Heart left ventricle (tissue), 16 donors: ENCODE measurements at regions of chr3 and their contacts with region 1.

Region 1: GRCh38 chr3:168939651-168940238 is 723.8 kb downstream of the MECOM start:
- DNase-seq: no peak
- ATAC-seq: no peak
- H3K4me3 ChIP-seq: no peak overlapping the region
- H3K27ac ChIP-seq: no peak overlapping the region
- H3K4me1 ChIP-seq: no peaks in the 10 kb centered on the region
- H3K27me3 ChIP-seq: no peaks in the 10 kb centered on the region
- CTCF ChIP-seq: no peak
- POLR2A ChIP-seq: no peak

Region 2: DNA sequence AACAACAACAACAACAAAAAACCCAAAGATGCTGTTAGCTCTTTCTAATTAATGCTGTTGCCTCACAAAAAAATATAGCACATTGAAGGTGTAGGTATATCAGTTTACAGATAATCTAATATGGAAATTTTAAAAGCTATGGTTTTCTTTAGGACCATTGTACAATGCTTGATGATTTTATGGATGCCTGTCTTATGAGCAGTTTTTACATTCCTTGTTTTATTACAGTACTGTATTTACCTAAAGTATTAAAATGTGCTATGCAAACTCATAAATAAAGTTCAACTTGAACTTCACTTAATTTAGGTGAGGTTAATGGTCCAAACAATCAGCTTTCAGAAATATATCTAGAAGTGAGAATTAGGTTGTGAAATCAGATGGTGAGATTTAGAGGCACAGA is 631.9 kb before region 1 on chr3:
- intact Hi-C with region 1: loop called in 1 of 10 experiments (anchors 5 kb)
- DNase-seq: no peak
- ATAC-seq: no peak
- H3K4me3 ChIP-seq: no peak overlapping the region
- H3K27ac ChIP-seq: no peak overlapping the region
- H3K4me1 ChIP-seq: no peaks in the 10 kb centered on the region
- H3K27me3 ChIP-seq: no peaks in the 10 kb centered on the region
- CTCF ChIP-seq: no peak
- POLR2A ChIP-seq: no peak

Region 3: DNA sequence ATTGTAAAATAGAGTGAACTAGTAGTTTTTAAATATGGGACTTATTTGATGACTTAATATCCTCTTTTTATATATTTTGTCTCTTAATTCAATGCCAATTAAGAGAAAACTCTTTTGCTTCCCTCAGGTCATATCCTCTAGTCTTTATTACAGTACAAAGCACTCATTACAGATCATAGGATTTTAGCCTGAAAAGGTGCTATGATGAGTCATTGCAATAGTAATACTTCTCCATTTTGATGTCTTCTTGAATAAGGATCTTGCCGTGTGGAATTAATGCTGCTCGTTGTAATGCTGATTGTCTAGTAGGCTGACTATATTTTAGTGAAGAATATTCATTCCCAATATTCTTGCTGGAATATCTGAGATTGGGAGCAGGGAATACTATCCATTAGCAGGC is 231.8 kb before region 1 on chr3:
- intact Hi-C with region 1: no loop called
- DNase-seq: no peak
- ATAC-seq: no peak
- H3K4me3 ChIP-seq: no peak overlapping the region
- H3K27ac ChIP-seq: no peak overlapping the region
- H3K4me1 ChIP-seq: no peaks in the 10 kb centered on the region
- H3K27me3 ChIP-seq: peaks cover 0 to 3% (median 0%) of the 10 kb centered on the region in 9 donors
- CTCF ChIP-seq: no peak
- POLR2A ChIP-seq: no peak

Region 4: DNA sequence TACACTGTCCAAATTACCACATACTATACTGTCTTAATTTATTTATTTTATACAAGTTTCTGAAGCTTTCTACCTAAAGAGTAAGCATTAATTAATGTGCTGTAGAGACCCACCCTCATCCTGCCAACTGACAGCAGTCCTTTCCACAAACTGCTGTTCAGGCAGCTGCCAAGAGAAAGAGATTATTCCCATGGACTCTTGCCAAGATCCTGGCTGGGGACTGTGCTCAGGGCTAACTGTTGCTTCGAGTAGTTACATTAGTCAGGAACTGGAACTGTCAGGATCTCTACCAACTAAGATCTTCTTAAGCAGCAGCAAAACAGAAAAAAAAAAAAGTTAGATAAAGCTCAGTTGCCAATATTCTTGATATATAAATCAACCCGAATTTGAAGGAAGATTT is 325.0 kb after region 1 on chr3:
- intact Hi-C with region 1: no loop called
- DNase-seq: peak in 4 of 5 donors; percentile 45 to 60 (median 50)
- ATAC-seq: peak in 3 of 4 donors; percentile 74 to 87 (median 75)
- H3K4me3 ChIP-seq: no peak overlapping the region
- H3K27ac ChIP-seq: no peak overlapping the region
- H3K4me1 ChIP-seq: peaks cover 0 to 30% (median 10%) of the 10 kb centered on the region in 12 donors
- H3K27me3 ChIP-seq: no peaks in the 10 kb centered on the region
- CTCF ChIP-seq: no peak
- POLR2A ChIP-seq: no peak

Region 5: GRCh38 chr3:169676925-169677537 is 737.3 kb after region 1 on chr3:
- intact Hi-C with region 1: loop called in 1 of 10 experiments (anchors 10 kb)
- DNase-seq: no peak
- ATAC-seq: no peak
- H3K4me3 ChIP-seq: no peak overlapping the region
- H3K27ac ChIP-seq: no peak overlapping the region
- H3K4me1 ChIP-seq: no peaks in the 10 kb centered on the region
- H3K27me3 ChIP-seq: peaks cover 0 to 22% (median 0%) of the 10 kb centered on the region in 9 donors
- CTCF ChIP-seq: no peak
- POLR2A ChIP-seq: no peak